WTC11 (cell line): ENCODE measurements at regions of chr14 and their contacts with region 1.

Region 1: GRCh38 chr14:20454516-20455354 is at the starts of genes APEX1 and OSGEP:
- DNase-seq: peak; percentile 97
- ATAC-seq: peak; percentile 82
- H3K4me3 Mint-ChIP-seq: no peak within 1 kb of the TSS
- H3K27ac Mint-ChIP-seq: no peak within 1 kb of the TSS
- H3K4me1 Mint-ChIP-seq: peaks cover 3% of the 10 kb centered on the region; the same call in 1 of the 2 replicates
- H3K27me3 Mint-ChIP-seq: no peaks in the 10 kb centered on the region
- CTCF ChIP-seq: no peak
- total RNA-seq, gene APEX1: 299 to 324 TPM (median 308 TPM) in 3 replicates
- total RNA-seq, gene OSGEP: 33.3 to 40.0 TPM (median 37.3 TPM) in 3 replicates

Region 2: DNA sequence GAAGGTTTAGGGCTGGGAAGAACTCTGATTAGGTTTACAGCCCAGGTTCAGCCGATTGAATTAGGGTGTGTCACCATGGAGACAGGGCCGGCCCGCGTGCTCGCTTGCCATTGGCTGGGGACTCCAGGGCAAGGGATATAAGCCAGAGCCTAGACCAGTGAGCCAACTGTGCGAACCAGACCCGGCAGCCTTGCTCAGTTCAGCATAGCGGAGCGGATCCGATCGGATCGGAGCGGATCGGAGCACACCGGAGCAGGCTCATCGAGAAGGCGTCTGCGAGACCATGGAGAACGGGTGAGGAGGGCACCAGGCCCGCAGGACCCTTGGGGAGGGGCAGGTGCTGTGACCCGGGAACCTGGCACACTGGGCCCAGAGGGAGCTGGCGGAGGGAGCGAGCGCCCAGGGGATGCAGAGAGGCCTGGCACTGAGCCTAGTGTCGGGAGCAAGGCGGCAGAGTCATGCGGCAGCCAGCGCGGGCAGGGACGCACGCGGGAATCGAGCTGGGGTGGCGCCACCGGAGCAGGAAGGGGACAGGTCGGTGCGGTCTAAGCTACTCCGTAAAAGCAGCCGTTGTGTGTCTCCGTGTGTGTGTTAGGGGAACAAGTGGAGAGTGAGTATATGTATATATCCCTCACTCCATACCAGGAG is 14.6 kb after region 1 on chr14 and contains the start of gene PNP:
- CTCF ChIA-PET with region 1: no interaction called
- POLR2A ChIA-PET with region 1: interaction called, 19 read pairs
- DNase-seq: peak; percentile 92
- ATAC-seq: peak; percentile 98
- H3K4me3 Mint-ChIP-seq: peak within 1 kb of the TSS; percentile 99
- H3K27ac Mint-ChIP-seq: peak within 1 kb of the TSS; percentile 98
- H3K4me1 Mint-ChIP-seq: peaks cover 19% of the 10 kb centered on the region
- H3K27me3 Mint-ChIP-seq: peaks cover 6% of the 10 kb centered on the region
- CTCF ChIP-seq: no peak
- total RNA-seq, gene PNP: 72.7 to 95.8 TPM (median 75.0 TPM) in 3 replicates